ENCODE measurements at regions of chr5 and their contacts with region 1.

Region 1: DNA sequence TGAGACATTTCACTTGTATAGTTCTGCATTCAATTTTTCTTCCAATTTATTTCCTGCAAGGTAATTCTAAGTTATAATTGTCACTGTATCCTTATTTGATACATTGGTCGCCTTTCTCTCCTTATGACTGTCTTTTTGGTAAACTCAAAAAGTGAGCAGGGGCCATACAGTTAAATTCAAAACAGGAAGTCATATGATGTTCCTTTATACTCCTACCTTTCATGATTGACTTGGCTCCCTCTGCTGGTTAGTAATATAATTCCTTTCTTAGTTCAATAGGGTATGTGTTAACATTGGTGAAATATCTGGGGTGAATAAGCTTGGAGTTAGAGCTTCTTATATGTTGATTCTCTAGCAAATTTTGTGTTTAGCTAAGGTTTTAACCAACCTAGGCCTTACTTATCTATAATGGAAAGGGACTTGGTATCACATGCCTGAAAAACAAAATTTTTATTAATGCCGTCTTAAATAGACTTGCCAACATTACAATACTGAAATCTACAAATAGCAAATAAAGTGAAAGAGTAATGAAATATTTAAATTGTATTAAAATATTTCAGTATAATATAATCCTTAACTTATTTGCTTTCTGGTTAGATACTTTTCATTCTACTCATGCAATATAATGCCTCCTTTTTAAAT is 6.0 kb upstream of the NIPBL start:
- DNase-seq: no peak
- H3K4me3 ChIP-seq: no peak overlapping the region
- CTCF ChIP-seq: peak; percentile 47

Region 2: DNA sequence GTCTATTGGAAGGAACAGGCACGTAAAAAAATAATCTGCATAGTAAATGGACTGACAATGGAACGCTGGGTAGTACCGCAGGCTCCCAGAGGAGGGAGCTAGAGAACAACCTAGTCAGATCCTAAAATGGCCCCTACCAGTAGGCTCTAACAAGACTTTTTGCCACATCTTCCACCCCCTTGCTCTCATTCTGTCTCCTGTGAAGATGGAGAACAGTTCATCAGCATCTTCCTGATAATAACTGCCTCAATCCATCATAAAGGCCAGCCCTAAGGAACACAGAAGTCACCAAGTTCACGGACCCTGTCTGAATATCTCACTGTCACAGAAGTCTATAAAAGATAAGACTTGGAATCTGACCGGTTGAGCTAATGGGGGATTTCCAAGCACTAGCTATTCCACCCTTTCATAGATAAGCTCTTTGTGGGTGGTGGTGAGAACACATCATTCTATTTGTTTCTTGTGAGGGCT is 130.7 kb before region 1 on chr5:
- CTCF ChIA-PET with region 1: interaction called, 18 read pairs
- POLR2A ChIA-PET with region 1: no interaction called
- DNase-seq: no peak
- H3K4me3 ChIP-seq: no peak overlapping the region
- CTCF ChIP-seq: peak; percentile 71

Region 3: DNA sequence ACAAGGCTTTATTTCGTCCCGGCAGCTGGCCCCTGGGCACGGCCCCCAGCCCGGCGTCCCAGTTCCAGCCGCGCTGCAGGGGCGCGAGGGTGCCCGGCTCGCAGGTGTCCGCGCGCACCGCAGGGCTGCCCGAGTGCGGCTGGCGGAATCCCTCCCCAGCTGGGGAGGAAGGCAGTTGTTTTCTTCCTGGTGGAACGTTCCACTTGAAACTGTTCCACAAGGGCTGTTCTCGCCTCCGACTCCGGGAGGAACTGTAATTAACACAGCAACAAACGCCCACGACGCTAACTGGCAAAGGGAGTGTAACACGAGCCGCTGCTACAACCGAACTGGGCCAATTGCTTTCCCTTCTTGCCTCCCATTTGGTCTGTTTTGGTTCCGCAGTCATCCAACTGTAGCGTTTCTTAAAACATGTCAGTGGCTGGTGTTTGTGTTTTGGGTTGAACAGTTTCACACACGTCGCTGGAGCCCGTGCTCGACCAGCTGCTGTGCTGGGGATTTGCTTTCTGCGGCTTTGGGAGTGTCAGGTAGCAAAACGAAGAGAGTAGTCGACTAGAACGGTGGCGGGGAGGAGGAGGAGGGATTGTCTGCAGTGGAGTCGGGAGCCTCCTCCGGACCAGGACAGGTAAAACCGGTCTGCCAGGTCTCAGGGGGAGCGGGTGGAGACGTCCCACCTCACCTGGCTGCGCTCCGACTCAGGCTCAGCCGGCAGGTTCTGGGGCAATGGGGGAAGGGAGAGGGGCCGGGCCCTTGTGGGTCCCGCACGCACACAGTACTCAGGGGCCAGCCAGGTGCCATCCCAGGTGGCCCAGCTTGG is 125.5 kb before region 1 on chr5:
- CTCF ChIA-PET with region 1: interaction called, 18 read pairs
- POLR2A ChIA-PET with region 1: no interaction called
- DNase-seq: no peak
- H3K4me3 ChIP-seq: peak overlapping the region; percentile 61
- CTCF ChIP-seq: no peak

Measured in AG04449 (cell line).